ENCODE measurements at regions of chr7 and their contacts with region 1.

Region 1: DNA sequence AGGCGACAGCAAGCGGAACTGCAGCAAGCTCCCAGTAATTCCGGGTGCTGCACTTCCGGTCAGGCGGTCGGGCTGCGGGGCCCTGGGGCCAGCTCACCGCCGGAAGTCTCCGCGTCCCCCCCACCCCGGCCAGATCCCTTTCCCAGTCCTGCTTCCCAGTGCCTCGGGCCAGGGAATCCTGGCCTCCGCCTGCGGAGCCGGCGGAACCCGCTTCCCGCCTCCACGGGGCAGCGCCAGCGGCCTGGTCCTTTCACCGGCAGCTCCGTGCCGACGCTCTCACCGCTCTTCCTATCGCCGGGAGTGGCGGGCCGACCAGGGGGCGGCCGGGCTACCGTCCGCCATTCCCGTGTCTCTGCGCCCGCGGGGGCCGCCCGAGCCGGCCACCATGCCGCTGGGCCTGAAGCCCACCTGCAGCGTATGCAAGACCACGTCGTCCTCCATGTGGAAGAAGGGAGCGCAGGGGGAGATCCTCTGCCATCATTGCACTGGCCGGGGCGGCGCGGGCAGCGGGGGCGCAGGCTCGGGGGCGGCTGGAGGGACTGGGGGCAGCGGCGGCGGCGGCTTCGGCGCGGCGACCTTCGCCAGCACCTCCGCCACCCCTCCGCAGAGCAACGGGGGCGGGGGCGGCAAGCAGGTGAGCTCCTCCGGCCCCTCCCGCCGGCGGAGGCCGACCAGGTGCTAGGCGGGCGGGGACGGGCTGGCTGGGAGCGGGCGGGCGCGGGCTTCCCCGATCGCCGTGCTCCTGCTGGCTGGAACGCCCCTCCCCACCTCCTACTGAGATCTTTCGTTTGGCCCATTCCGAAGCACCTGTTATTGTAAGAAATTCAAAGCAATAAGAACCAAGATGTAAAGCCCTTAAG is at the start of gene GATAD1:
- DNase-seq: peak; percentile 93
- H3K4me3 Mint-ChIP-seq: peak within 1 kb of the TSS; percentile 85
- H3K27ac Mint-ChIP-seq: peak within 1 kb of the TSS; percentile 89
- H3K4me1 Mint-ChIP-seq: no peaks in the 10 kb centered on the region
- H3K27me3 Mint-ChIP-seq: no peaks in the 10 kb centered on the region
- CTCF ChIP-seq: peak; percentile 88
- total RNA-seq, gene GATAD1: 41.2 and 44.2 TPM in 2 replicates

Region 2: GRCh38 chr7:91826377-91826776 is 621.2 kb before region 1 on chr7:
- CTCF ChIA-PET with region 1: interaction called, 8 read pairs
- POLR2A ChIA-PET with region 1: interaction called, 3 read pairs
- intact Hi-C with region 1: loop called (anchors 1 kb)
- DNase-seq: peak; percentile 6
- H3K4me3 Mint-ChIP-seq: no peak overlapping the region
- H3K27ac Mint-ChIP-seq: no peak overlapping the region
- H3K4me1 Mint-ChIP-seq: peaks cover 7% of the 10 kb centered on the region
- H3K27me3 Mint-ChIP-seq: no peaks in the 10 kb centered on the region
- CTCF ChIP-seq: no peak

Region 3: DNA sequence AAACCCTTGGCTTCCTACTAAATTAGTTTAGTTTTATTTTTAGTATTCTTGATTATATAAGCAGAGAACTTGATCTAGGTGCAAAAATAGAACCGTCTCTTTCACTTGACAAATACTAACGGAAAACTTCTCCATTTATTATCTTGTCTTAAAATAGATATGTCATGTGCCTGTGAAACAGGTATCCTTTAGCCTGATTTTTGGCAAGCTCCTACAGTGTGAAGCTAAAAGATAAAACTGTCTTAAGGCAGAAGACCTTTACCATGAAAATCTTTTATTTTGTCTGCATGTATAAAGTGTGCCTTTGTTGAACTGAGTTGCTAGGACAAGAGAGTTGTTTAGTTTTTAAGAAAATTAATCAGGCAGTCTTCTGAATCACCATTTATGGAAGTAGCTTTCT is 403.9 kb before region 1 on chr7:
- CTCF ChIA-PET with region 1: no interaction called
- POLR2A ChIA-PET with region 1: no interaction called
- intact Hi-C with region 1: loop called (anchors 1 kb)
- DNase-seq: no peak
- H3K4me3 Mint-ChIP-seq: no peak overlapping the region
- H3K27ac Mint-ChIP-seq: no peak overlapping the region
- H3K4me1 Mint-ChIP-seq: no peaks in the 10 kb centered on the region
- H3K27me3 Mint-ChIP-seq: no peaks in the 10 kb centered on the region
- CTCF ChIP-seq: no peak

Region 4: DNA sequence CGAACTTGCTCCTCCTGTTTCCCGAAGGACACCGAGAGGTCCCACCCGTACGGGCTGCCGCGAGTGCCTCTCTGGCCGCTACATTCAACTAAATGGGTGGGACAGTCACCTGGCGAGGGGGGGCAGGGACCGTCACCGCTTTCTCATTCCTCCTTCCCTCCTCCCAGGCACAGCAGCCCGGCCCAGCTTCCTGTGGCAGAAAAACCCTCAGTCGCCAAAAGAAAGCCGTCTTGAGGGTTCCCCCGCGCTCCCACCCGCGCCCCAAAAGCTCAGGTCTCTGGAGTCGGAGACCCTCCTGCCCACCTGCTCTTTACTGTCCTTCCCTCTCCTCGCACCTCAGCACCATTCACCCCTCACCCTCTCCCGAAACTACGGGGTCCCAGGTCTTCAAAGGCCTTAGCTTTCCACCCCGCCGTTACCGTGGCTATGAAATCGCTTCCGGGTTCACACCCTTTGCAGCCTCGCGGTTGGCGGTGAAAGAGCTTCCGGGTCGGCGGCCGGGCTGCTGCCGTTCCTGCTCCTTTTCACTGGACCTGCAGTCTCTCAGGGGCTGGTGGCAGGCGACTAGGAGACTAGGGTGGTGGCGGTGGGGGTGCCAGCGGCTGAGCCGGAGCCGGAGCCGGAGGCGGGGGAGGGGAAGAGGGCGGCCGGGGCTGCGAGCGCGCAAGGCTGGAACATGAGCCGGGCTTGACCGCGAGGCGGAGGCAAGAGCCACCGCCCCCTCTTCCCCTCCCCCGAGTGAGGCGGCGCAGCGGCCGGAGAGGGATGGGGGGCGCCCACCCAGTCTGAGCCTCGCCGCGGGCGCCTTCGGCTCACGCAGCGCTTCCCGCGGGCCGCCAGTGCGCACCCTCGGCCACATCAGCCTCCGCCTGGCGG is 201.8 kb before region 1 on chr7 and contains the starts of genes ANKIB1 and KRIT1:
- CTCF ChIA-PET with region 1: interaction called, 13 read pairs
- POLR2A ChIA-PET with region 1: interaction called, 84 read pairs
- intact Hi-C with region 1: loop called (anchors 1 kb)
- DNase-seq: peak; percentile 83
- H3K4me3 Mint-ChIP-seq: peak within 1 kb of the TSS; percentile 89
- H3K27ac Mint-ChIP-seq: peak within 1 kb of the TSS; percentile 98
- H3K4me1 Mint-ChIP-seq: peaks cover 29% of the 10 kb centered on the region
- H3K27me3 Mint-ChIP-seq: no peaks in the 10 kb centered on the region
- CTCF ChIP-seq: no peak
- total RNA-seq, gene ANKIB1: 33.0 and 40.1 TPM in 2 replicates
- total RNA-seq, gene KRIT1: 38.9 and 41.3 TPM in 2 replicates

Region 5: DNA sequence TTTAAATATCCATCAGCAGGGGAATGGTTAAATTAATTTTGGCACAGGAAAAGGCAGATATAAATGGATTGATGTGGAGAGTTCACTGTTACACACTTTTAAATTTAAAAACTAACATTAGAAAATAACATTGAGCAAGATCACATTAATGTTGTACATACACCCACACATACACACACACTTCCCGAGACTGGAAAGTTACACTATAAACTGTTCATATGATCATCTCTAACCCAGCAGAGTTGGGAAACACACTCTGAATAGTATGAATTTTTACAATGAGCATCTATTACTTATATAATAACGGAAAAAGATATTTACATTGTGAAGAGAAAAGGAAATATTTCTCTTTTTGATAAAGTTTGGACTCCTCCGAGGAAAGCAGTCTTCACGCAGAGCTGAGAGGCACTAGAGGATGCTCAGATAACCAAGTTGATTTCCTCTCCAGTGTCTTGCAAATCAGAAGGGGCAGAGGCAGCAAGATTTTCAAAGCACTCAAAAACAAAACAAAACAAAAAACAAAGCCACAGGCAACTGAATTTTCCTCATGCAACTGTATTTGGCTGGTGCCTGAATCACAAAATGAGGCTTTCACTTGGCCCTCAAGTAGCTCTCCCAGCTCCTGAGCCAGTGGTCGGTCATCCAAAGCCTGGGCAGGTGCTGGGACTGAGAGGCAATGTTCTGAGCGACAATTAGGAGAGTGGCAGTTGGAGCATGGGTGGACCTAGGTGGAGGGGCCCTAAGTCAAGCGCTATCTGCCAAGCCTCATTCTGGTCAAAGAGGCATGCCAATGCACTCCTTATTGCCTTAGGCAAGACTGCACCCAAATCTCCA is 10.7 kb before region 1 on chr7:
- CTCF ChIA-PET with region 1: interaction called, 12 read pairs
- POLR2A ChIA-PET with region 1: interaction called, 3 read pairs
- intact Hi-C with region 1: no loop called
- DNase-seq: no peak
- H3K4me3 Mint-ChIP-seq: no peak overlapping the region
- H3K27ac Mint-ChIP-seq: no peak overlapping the region
- H3K4me1 Mint-ChIP-seq: no peaks in the 10 kb centered on the region
- H3K27me3 Mint-ChIP-seq: peaks cover 19% of the 10 kb centered on the region
- CTCF ChIP-seq: no peak

Region 6: DNA sequence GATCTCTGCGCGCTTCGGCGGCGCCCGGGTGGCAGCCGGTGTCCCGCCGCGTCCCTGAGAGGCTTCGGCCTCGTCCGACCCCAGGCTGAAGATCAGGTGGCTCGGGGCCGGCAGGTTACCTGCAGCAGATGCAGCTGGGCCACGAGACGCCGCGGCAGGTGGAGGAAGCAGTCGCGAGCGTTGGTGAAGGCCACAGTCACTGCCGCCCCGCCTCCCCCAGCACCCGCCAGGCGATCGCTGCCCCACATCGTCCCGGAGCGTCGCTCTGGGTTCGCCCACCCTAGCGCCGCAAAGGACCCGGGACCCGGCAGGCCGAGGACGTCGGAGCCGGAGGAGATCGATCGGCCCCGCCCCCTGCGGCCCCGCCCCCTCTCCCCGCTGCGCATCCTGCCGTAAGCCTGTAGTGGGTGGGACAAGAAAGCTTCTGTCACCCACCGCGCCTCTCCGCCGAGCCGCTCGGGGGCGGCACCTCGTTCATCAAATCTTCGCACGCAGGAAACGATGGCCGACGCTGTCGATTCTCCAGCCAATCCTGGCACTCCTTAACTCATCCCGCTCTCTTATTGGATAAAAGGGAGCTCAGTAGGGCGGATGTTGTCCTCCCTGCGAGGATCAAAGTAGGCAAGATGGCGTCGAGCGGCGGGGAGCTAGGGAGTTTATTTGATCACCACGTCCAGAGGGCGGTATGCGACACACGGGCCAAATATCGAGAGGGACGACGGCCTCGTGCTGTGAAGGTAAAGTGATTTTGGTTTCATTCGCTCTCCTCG is 80.8 kb after region 1 on chr7 and contains the starts of genes PEX1 and RBM48:
- CTCF ChIA-PET with region 1: interaction called, 5 read pairs
- POLR2A ChIA-PET with region 1: interaction called, 21 read pairs
- intact Hi-C with region 1: no loop called
- DNase-seq: peak; percentile 99
- H3K4me3 Mint-ChIP-seq: peak within 1 kb of the TSS; percentile 98
- H3K27ac Mint-ChIP-seq: peak within 1 kb of the TSS; percentile 99
- H3K4me1 Mint-ChIP-seq: peaks cover 16% of the 10 kb centered on the region
- H3K27me3 Mint-ChIP-seq: no peaks in the 10 kb centered on the region
- CTCF ChIP-seq: no peak
- total RNA-seq, gene PEX1: 12.4 and 12.6 TPM in 2 replicates
- total RNA-seq, gene RBM48: 10.4 and 10.7 TPM in 2 replicates

Measured in MCF 10A (cell line).